HepG2 (cell line): ENCODE measurements at regions of chr3 and their contacts with region 1.

Region 1: GRCh38 chr3:40505599-40506462 is at the start of gene ZNF620:
- DNase-seq: peak; percentile 92
- ATAC-seq: peak; percentile 98
- H3K4me3 ChIP-seq: peak within 1 kb of the TSS; percentile 75 to 86 (median 76)
- H3K27ac ChIP-seq: peak within 1 kb of the TSS; percentile 91
- H3K4me1 ChIP-seq: peaks cover 23% of the 10 kb centered on the region
- H3K27me3 ChIP-seq: no peaks in the 10 kb centered on the region; a peak in 1 of 5 replicates
- CTCF ChIP-seq: peak; percentile 80
- EP300 ChIP-seq: no peak; a peak in 1 of 4 replicates
- POLR2A ChIP-seq: peak; percentile 74 to 78
- RAD21 ChIP-seq: peak; percentile 82
- total RNA-seq, gene ZNF620: 12.2 and 16.3 TPM in 2 replicates

Region 2: GRCh38 chr3:40329071-40329470 is 176.8 kb before region 1 on chr3:
- CTCF ChIA-PET with region 1: no interaction called
- POLR2A ChIA-PET with region 1: no interaction called
- in situ Hi-C with region 1: no loop called
- intact Hi-C with region 1: loop called (anchors 5 kb)
- DNase-seq: no peak
- ATAC-seq: peak; percentile 47; the same call in 1 of the 3 replicates
- H3K4me3 ChIP-seq: no peak overlapping the region
- H3K27ac ChIP-seq: no peak overlapping the region
- H3K4me1 ChIP-seq: peaks cover 10% of the 10 kb centered on the region; the same call in 1 of the 2 replicates
- H3K27me3 ChIP-seq: no peaks in the 10 kb centered on the region; a peak in 2 of 5 replicates
- CTCF ChIP-seq: no peak
- EP300 ChIP-seq: no peak
- POLR2A ChIP-seq: no peak
- RAD21 ChIP-seq: no peak

Region 3: DNA sequence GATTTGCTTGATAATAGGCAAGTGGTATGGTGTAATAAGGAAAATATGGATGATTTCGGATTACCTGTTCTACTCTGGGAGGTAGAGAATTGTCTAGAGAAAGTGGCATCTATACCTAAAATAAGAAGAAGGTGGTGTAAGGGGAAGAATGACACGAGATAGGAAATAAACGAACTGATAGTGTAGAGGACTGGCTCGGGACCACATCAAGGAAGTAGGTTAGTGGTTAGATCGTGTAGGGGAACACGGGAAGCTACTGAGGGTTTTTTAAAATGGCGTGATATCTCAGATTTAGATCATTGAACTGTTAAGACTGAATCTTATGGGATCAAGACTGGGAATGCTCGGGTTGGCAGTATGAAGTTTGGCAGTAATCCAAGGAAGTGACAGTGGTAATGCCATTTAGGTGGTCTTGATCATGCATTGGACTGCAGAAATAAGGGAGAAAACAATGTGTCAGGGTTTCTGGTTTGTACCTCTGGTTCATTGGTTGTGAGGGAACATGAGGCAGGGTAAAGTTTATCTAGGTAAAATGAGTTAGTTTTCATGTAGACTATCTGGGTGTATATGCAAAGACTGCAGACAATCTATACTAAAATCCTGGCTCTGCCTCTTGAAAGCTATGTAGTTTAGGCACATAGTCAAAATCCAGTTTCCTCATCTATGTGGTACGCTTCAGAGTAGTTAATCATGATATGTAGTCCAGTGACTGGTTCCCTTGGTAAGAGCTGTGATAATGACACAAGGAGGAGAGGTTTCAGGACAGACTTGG is 41.3 kb before region 1 on chr3:
- CTCF ChIA-PET with region 1: no interaction called
- POLR2A ChIA-PET with region 1: interaction called, 37 read pairs
- in situ Hi-C with region 1: no loop called
- intact Hi-C with region 1: loop called (anchors 5 kb)
- DNase-seq: no peak
- ATAC-seq: peak; percentile 4; the same call in 1 of the 3 replicates
- H3K4me3 ChIP-seq: no peak overlapping the region
- H3K27ac ChIP-seq: no peak overlapping the region
- H3K4me1 ChIP-seq: peaks cover 24% of the 10 kb centered on the region
- H3K27me3 ChIP-seq: no peaks in the 10 kb centered on the region
- CTCF ChIP-seq: no peak
- EP300 ChIP-seq: no peak
- POLR2A ChIP-seq: no peak; a peak in 1 of 4 replicates
- RAD21 ChIP-seq: no peak

Region 4: GRCh38 chr3:40476478-40477470 is 29.1 kb before region 1 on chr3 and contains the start of gene ZNF619:
- CTCF ChIA-PET with region 1: no interaction called
- POLR2A ChIA-PET with region 1: interaction called, 54 read pairs
- in situ Hi-C with region 1: no loop called
- intact Hi-C with region 1: loop called (anchors 1 kb)
- DNase-seq: peak; percentile 59
- ATAC-seq: peak; percentile 92
- H3K4me3 ChIP-seq: peak within 1 kb of the TSS; percentile 95 to 96 (median 95)
- H3K27ac ChIP-seq: peak within 1 kb of the TSS; percentile 51
- H3K4me1 ChIP-seq: peaks cover 19% of the 10 kb centered on the region
- H3K27me3 ChIP-seq: no peaks in the 10 kb centered on the region; a peak in 1 of 5 replicates
- CTCF ChIP-seq: peak; percentile 8; the same call in 1 of the 2 replicates
- EP300 ChIP-seq: no peak
- POLR2A ChIP-seq: peak; percentile 43 to 51; a peak in 2 of 4 replicates
- RAD21 ChIP-seq: peak; percentile 29; the same call in 1 of the 2 replicates
- total RNA-seq, gene ZNF619: 4.9 and 5.2 TPM in 2 replicates

Region 5: GRCh38 chr3:40524568-40525285 is 18.9 kb after region 1 on chr3 and contains the start of gene ZNF621:
- CTCF ChIA-PET with region 1: no interaction called
- POLR2A ChIA-PET with region 1: interaction called, 119 read pairs
- in situ Hi-C with region 1: no loop called
- intact Hi-C with region 1: loop called (anchors 1 kb)
- DNase-seq: peak; percentile 75
- ATAC-seq: peak; percentile 99
- H3K4me3 ChIP-seq: peak within 1 kb of the TSS; percentile 98 to 99 (median 99)
- H3K27ac ChIP-seq: peak within 1 kb of the TSS; percentile 86
- H3K4me1 ChIP-seq: peaks cover 34% of the 10 kb centered on the region
- H3K27me3 ChIP-seq: no peaks in the 10 kb centered on the region; a peak in 1 of 5 replicates
- CTCF ChIP-seq: peak; percentile 59
- EP300 ChIP-seq: no peak
- POLR2A ChIP-seq: peak; percentile 94
- RAD21 ChIP-seq: peak; percentile 45; the same call in 1 of the 2 replicates
- total RNA-seq, gene ZNF621: 13.2 and 16.5 TPM in 2 replicates